ENCODE measurements at regions of chr6 and their contacts with region 1.

Region 1: DNA sequence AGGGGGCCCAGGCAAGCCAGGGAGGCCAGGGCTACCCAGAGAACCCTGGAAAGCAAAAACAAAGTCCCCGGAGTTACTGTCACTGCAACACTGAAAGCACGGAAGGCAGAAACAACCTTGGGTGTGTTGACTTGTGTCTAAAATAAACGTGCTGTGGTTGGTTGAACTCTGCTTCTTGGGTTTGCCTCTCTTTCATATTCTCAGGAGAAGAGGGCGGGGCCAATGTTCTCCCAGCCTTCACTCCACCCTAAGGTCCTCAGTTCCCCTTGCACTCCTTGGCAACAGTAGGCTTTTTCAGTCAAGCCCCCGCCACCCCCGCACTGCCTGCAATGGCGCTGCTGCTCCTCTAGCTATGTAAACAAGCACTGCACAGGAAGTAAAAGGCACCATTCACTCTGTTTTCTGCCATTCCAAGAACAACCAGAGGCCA is 60.9 kb downstream of the COL9A1 start:
- DNase-seq: no peak
- CTCF ChIP-seq: no peak

Region 2: DNA sequence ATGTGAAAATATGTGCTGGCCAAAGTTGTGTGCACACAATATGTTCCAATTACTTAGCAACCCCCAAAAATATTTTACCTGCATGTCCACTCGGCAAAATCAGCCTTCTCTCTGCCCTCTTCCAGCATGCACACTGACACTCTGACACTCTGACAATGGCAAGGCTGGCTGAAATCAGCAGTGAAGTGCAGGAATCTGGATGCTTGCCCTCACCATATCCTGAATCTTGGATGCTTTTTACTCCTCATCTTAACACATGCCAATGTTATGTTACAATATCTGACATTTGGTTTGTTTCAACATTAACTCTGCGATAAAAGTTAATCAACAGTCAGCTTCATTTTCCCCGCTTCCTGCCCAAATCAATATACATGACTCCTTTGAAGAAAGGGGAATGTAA is 142.3 kb before region 1 on chr6:
- CTCF ChIA-PET with region 1: no interaction called
- POLR2A ChIA-PET with region 1: no interaction called
- DNase-seq: no peak
- CTCF ChIP-seq: no peak

Region 3: GRCh38 chr6:70231311-70231710 is 10.7 kb before region 1 on chr6:
- CTCF ChIA-PET with region 1: interaction called, 16 read pairs
- POLR2A ChIA-PET with region 1: no interaction called
- DNase-seq: no peak
- CTCF ChIP-seq: no peak

Measured in GM10248 (cell line).